ENCODE measurements at regions of chr19 and their contacts with region 1.

Region 1: GRCh38 chr19:48110350-48110966 is at the start of gene PLA2G4C:
- DNase-seq: peak; percentile 92
- ATAC-seq: peak; percentile 83 to 90 (median 85)
- H3K4me3 ChIP-seq: peak within 1 kb of the TSS; percentile 48 to 66 (median 64)
- H3K27ac ChIP-seq: peak within 1 kb of the TSS; percentile 88 to 98 (median 97)
- H3K4me1 ChIP-seq: peaks cover 0 to 8% (median 0%) of the 10 kb centered on the region in 4 donors
- H3K27me3 ChIP-seq: no peaks in the 10 kb centered on the region
- CTCF ChIP-seq: no peak
- POLR2A ChIP-seq: peak; percentile 82
- total RNA-seq, gene PLA2G4C: 3.8 to 29.7 (median 9.8) TPM

Region 2: DNA sequence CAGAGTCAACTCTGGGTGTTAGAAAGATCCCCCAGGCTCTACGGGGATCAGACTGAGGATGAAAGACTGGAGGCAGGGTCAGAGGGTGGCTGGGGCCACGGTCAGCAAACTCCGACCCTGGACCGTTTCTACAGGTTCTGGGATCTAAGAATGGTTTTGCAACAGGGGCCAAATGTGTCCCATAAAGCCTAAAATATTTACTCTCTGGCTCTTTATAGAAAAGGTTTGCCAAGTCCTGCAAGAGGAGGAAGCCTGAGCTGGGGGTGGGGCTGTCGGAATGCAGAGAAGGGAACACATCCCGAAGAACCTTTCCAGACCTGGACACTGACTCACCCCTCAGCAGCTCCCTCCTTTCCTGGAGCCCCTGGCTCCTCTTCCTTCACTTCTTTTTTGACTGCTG is 39.0 kb after region 1 on chr19:
- intact Hi-C with region 1: loop called in 1 of 2 experiments (anchors 5 kb)
- DNase-seq: peak; percentile 55 to 73 (median 66)
- ATAC-seq: peak; percentile 75 to 87 (median 84)
- H3K4me3 ChIP-seq: no peak overlapping the region
- H3K27ac ChIP-seq: peak overlapping the region in 1 of 3 donors; percentile 59
- H3K4me1 ChIP-seq: peaks cover 0 to 26% (median 11%) of the 10 kb centered on the region in 4 donors
- H3K27me3 ChIP-seq: no peaks in the 10 kb centered on the region
- CTCF ChIP-seq: no peak
- POLR2A ChIP-seq: no peak

Region 3: DNA sequence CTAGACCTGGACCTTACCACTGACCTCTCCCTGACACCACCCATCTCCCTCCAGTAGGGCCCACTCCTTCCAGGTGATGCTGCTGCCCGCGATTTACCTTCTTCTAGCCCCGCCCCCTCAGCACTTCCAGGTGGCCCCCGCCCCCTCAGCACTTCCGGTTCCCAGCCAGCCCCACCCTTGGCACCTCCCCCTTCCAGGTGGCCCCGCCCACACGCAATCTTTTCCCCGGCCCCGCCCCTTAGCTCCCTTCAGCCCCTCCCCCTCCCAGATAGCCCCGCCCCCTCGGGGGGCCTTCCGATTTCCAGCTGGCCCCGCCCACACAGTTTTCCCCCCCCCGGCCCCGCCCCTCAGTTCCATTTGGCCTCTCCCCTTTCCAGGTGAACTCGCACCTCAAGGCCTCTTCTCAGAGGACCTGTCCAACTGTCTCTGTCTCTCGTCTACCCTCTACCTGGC is 59.2 kb after region 1 on chr19:
- intact Hi-C with region 1: loop called in 1 of 2 experiments (anchors 5 kb)
- DNase-seq: peak; percentile 86 to 89 (median 86)
- ATAC-seq: peak; percentile 69 to 82 (median 73)
- H3K4me3 ChIP-seq: peak overlapping the region; percentile 78 to 85 (median 80)
- H3K27ac ChIP-seq: peak overlapping the region; percentile 75 to 97 (median 94)
- H3K4me1 ChIP-seq: peaks cover 0 to 5% (median 0%) of the 10 kb centered on the region in 4 donors
- H3K27me3 ChIP-seq: no peaks in the 10 kb centered on the region
- CTCF ChIP-seq: no peak
- POLR2A ChIP-seq: no peak

Region 4: GRCh38 chr19:48218997-48219396 is 108.5 kb after region 1 on chr19:
- intact Hi-C with region 1: no loop called
- DNase-seq: no peak
- ATAC-seq: no peak
- H3K4me3 ChIP-seq: no peak overlapping the region
- H3K27ac ChIP-seq: no peak overlapping the region
- H3K4me1 ChIP-seq: no peaks in the 10 kb centered on the region
- H3K27me3 ChIP-seq: no peaks in the 10 kb centered on the region
- CTCF ChIP-seq: no peak
- POLR2A ChIP-seq: no peak

Measured in right lobe of liver (tissue), 6 donors.